Heart right ventricle (tissue), 16 donors: ENCODE measurements at regions of chr11 and their contacts with region 1.

Region 1: DNA sequence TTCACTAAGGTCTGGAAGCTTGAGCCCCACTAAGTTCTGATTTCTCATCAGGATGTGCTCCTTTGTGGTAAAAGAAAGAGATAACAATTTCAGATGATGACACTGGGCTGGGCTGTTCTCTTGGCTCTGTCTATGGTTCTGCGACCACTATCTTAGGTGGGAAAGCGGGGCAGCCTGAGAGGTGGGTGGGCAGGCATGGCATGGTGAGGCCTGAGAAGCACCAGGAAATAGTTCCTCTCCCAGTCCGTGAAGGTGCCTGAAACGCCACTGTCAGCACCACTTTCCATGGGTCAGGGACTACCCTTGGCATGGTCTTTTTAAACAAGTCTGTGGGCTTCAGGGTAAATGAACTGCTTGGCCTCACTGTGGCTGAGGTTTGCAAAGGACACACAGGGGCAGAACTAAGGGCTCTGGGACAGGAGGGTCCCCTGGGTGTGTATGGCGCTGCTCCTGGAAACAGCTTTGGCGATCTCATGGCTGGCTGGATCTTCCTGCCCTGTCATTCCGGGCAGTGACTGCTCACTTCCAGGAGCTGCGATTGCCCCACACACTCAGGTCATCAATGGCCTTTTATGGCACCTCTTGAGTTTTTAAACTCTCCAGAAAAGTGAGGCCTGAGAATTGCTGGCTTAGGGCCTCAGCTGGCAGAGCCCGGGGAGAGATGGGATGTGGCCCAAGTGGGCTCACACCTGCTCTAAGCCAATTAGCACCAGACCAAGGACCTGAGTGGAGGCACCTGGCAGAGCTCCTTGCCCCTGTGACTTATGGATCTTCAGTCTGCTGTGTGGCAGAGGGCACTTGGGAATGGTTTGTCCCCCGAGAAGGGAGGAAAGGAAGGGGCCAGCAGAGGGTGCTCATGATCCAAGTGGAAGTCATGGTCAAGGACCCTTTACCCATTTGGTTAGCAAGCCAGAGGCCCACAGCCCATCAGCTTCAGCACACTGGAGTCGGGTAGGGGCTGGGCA is 55.6 kb upstream of the LYVE1 start:
- DNase-seq: peak in 1 of 2 donors; percentile 41
- ATAC-seq: peak in 5 of 8 donors; percentile 28 to 67 (median 38)
- H3K4me3 ChIP-seq: no peak overlapping the region
- H3K27ac ChIP-seq: peak overlapping the region in 6 of 10 donors; percentile 3 to 84 (median 42)
- H3K4me1 ChIP-seq: peaks cover 0 to 42% (median 6%) of the 10 kb centered on the region in 9 donors
- H3K27me3 ChIP-seq: no peaks in the 10 kb centered on the region
- CTCF ChIP-seq: peak in 8 of 9 donors; percentile 11 to 64 (median 46)

Region 2: DNA sequence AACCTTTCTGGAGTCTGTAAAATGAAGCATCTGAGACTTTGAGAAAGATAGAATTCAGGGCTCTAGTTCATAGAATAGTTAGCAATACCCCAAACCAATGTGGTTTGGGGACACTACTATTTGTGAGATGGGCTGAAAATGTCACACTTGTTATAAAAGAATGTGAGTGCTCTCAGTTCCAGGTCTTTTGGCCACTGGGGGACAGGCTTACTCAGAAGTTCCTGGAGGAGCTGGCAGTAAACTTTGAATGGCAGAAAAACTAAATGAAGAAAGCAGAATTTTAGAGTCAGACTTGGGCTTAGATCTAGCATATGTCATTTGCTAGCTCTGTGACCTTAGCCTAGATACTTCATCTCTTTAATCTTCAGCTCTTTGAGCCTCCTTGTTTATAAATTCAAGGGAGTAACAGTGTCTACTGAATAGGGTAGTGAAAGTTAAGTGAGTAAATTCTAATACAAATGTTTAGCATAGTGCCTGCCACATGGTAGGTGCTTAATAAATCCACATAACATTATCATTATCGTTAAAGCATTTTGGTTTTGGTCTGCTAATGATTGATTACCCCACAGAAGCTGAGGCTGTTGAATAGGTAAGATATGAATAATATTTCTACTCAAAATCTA is 59.3 kb before region 1 on chr11:
- intact Hi-C with region 1: loop called in 1 of 10 experiments (anchors 10 kb)
- DNase-seq: no peak
- ATAC-seq: no peak
- H3K4me3 ChIP-seq: peak overlapping the region in 3 of 10 donors; percentile 0 to 48 (median 25)
- H3K27ac ChIP-seq: peak overlapping the region in 1 of 10 donors; percentile 87
- H3K4me1 ChIP-seq: peaks cover 0 to 34% (median 4%) of the 10 kb centered on the region in 9 donors
- H3K27me3 ChIP-seq: no peaks in the 10 kb centered on the region
- CTCF ChIP-seq: peak in 8 of 9 donors; percentile 7 to 50 (median 42)

Region 3: DNA sequence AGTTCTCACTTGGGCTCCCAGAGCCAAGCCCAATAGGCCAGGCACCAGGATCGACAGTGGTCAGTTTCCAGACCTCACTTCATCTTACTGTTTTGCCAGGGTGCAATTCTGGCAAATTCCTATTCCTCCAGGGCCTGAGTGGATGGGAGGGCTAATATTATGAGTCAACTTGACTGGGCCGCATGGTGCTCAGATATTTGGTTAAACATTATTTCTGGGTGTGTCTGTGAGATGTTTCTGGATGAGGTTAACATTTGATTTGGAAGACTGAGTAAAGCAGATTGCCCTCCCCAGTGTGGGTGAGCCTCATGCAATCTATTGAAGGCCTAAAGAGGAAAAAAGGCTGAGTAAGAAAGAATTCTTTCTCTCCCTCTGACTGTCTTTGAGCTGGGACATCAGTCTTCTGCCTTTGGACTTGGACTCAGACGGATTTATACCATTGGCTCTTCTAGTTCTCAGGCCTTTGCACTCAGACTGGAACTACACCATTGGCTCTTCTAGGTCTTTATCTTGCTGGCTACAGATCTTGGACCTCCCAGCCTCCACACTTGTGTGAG is 366.6 kb after region 1 on chr11:
- intact Hi-C with region 1: no loop called
- DNase-seq: no peak
- ATAC-seq: no peak
- H3K4me3 ChIP-seq: no peak overlapping the region
- H3K27ac ChIP-seq: no peak overlapping the region
- H3K4me1 ChIP-seq: no peaks in the 10 kb centered on the region
- H3K27me3 ChIP-seq: no peaks in the 10 kb centered on the region
- CTCF ChIP-seq: no peak